MCF 10A (cell line): ENCODE measurements at regions of chr1 and their contacts with region 1.

Region 1: GRCh38 chr1:165392634-165393571 is 36.4 kb upstream of the LMX1A start:
- DNase-seq: peak; percentile 88
- H3K4me3 Mint-ChIP-seq: peak overlapping the region; percentile 47
- H3K27ac Mint-ChIP-seq: no peak overlapping the region
- H3K4me1 Mint-ChIP-seq: peaks cover 18% of the 10 kb centered on the region
- H3K27me3 Mint-ChIP-seq: peaks cover 83% of the 10 kb centered on the region
- CTCF ChIP-seq: peak; percentile 98

Region 2: DNA sequence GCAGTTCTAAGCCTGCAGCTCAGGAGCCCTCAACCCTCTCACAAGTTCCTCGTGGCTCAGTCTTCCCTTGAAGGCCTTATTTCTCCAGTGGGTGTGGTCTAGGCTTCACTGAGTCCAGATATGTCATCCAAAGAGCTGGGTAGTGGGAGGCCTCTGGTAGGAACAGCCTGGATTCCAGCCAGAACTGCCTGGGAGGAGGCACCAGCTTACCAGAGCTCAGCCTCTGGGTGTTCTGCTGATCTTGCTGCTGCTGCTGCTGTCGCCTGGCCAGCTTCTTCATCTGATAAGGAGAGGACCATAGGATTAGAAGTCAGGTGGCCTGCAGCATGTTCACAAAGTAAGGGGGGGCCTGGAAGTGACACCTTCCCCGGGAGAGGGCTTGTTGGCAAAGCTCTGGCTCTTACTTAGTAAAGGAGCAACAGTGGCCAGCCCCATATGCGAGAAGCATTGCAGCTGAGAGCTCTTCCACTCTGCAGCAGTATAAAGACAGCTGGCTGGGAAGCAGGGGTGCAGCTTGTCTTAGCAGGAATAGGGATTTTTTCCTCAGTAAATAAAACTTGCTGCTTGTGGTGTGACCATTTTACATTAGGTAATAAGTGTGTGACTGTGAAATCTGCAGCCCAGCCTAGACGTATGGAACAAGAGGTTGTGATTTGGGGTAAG is 184.9 kb before region 1 on chr1:
- CTCF ChIA-PET with region 1: no interaction called
- POLR2A ChIA-PET with region 1: no interaction called
- intact Hi-C with region 1: no loop called
- DNase-seq: peak; percentile 11
- H3K4me3 Mint-ChIP-seq: no peak overlapping the region
- H3K27ac Mint-ChIP-seq: no peak overlapping the region
- H3K4me1 Mint-ChIP-seq: no peaks in the 10 kb centered on the region
- H3K27me3 Mint-ChIP-seq: no peaks in the 10 kb centered on the region
- CTCF ChIP-seq: no peak

Region 3: GRCh38 chr1:165306541-165307434 is 86.1 kb before region 1 on chr1:
- CTCF ChIA-PET with region 1: no interaction called
- POLR2A ChIA-PET with region 1: no interaction called
- intact Hi-C with region 1: no loop called
- DNase-seq: peak; percentile 21
- H3K4me3 Mint-ChIP-seq: no peak overlapping the region
- H3K27ac Mint-ChIP-seq: no peak overlapping the region
- H3K4me1 Mint-ChIP-seq: peaks cover 4% of the 10 kb centered on the region
- H3K27me3 Mint-ChIP-seq: peaks cover 49% of the 10 kb centered on the region
- CTCF ChIP-seq: no peak

Region 4: DNA sequence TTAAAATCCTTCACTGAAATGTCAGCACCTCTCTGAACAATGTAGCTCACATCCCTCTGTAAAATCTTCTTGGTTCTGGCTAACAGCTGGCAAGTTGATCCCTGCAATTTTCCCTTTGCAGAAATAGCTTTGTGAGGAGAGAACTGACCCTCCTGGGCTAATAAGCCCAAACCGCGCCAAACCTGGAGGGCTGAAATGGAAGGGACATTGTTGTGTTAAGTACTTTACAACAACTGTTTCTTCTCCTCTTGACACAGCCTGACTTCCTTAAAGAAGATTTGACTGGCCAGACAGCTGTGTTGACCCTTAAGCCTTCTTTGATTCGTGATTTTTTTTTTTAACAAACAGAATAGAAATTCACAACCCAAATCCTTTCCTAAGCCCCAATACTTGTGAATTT is 42.1 kb before region 1 on chr1:
- CTCF ChIA-PET with region 1: interaction called, 14 read pairs
- POLR2A ChIA-PET with region 1: no interaction called
- intact Hi-C with region 1: no loop called
- DNase-seq: no peak
- H3K4me3 Mint-ChIP-seq: no peak overlapping the region
- H3K27ac Mint-ChIP-seq: no peak overlapping the region
- H3K4me1 Mint-ChIP-seq: no peaks in the 10 kb centered on the region
- H3K27me3 Mint-ChIP-seq: peaks cover 93% of the 10 kb centered on the region
- CTCF ChIP-seq: no peak

Region 5: GRCh38 chr1:165403835-165404482 is 11.1 kb after region 1 on chr1:
- CTCF ChIA-PET with region 1: interaction called, 143 read pairs
- POLR2A ChIA-PET with region 1: no interaction called
- intact Hi-C with region 1: loop called (anchors 1 kb)
- DNase-seq: peak; percentile 65
- H3K4me3 Mint-ChIP-seq: no peak overlapping the region
- H3K27ac Mint-ChIP-seq: no peak overlapping the region
- H3K4me1 Mint-ChIP-seq: no peaks in the 10 kb centered on the region
- H3K27me3 Mint-ChIP-seq: peaks cover 13% of the 10 kb centered on the region
- CTCF ChIP-seq: peak; percentile 91

Region 6: DNA sequence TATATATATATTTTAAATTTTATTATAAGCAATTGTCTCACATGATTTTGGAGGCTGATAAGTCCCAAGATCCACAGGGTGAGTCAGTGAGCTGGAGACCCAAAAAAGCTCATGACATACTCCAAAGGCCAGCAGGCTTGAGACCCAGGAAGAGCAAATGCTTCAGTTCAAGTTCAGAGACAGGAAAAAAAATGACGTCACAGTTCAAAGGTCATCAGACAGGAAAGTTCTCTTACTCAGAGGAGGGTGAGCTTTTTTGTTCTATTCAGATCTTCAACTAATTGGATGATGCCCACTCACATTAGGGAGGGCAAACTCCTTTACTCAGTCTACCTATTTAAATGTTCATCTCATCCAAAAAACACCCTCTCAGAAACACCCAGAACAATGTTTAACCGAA is 33.8 kb after region 1 on chr1:
- CTCF ChIA-PET with region 1: interaction called, 10 read pairs
- POLR2A ChIA-PET with region 1: no interaction called
- intact Hi-C with region 1: no loop called
- DNase-seq: no peak
- H3K4me3 Mint-ChIP-seq: no peak overlapping the region
- H3K27ac Mint-ChIP-seq: no peak overlapping the region
- H3K4me1 Mint-ChIP-seq: no peaks in the 10 kb centered on the region
- H3K27me3 Mint-ChIP-seq: no peaks in the 10 kb centered on the region
- CTCF ChIP-seq: no peak

Region 7: DNA sequence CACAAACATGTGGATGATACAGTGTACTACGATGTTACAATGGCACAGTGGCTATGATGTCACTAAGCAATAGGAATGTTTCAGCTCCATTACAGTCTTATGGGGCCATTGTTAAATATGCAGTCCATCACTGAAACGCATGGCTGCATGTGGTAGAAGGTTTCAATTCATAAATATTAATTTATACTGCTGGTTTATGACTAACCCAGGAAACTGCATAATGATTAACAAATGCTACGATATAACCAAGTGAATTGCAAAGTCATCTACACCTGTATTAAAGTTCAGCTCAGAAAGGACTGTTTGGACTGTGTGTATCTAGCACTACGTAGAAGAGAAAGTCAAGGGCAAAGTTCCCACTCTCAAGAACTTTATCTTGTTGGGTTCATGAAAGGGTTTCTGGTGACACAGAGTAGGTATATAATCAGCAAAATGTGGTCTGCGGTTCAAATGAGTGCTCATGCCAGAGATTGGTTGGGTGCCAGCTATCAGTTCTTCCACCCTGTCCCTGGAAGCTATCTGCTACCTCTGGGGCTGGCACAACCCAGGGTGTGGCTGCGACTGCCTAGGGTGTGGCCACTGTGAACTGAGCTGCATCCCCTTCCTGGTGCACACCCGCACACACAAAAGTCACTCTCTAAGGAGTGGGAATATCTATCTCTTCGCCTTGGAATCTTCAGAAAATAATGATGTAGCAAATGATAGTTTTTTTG is 252.9 kb after region 1 on chr1:
- CTCF ChIA-PET with region 1: interaction called, 10 read pairs
- POLR2A ChIA-PET with region 1: no interaction called
- intact Hi-C with region 1: no loop called
- DNase-seq: peak; percentile 42
- H3K4me3 Mint-ChIP-seq: no peak overlapping the region
- H3K27ac Mint-ChIP-seq: no peak overlapping the region
- H3K4me1 Mint-ChIP-seq: peaks cover 17% of the 10 kb centered on the region
- H3K27me3 Mint-ChIP-seq: no peaks in the 10 kb centered on the region
- CTCF ChIP-seq: no peak